Right ventricle myocardium superior (tissue), 1 donor: ENCODE measurements at regions of chr16 and their contacts with region 1.

Region 1: DNA sequence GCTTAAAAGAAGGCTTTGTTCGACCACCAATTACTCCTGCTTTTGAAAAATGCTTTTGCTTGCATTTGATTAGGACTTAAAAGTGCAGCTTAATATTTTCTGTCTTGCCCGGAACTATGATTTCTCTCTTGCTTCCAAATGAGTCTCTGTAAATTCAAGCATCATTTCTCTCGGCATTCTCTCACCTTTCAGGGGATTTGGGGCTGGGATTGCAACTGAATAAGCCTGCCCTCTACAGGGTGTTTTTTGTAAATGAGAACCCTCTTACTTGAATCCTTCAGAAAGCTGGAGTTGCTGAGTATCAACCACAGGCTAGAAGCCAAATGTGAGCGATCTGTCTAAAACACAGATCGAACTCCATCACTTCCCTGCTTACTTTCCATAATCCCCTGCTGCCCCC is 234.6 kb downstream of the TMEM114 start:
- DNase-seq: no peak
- ATAC-seq: no peak

Region 2: GRCh38 chr16:8407351-8407750 is 51.7 kb after region 1 on chr16:
- intact Hi-C with region 1: loop called (anchors 5 kb)
- DNase-seq: no peak
- ATAC-seq: no peak